ENCODE measurements at regions of chr17 and their contacts with region 1.

Region 1: DNA sequence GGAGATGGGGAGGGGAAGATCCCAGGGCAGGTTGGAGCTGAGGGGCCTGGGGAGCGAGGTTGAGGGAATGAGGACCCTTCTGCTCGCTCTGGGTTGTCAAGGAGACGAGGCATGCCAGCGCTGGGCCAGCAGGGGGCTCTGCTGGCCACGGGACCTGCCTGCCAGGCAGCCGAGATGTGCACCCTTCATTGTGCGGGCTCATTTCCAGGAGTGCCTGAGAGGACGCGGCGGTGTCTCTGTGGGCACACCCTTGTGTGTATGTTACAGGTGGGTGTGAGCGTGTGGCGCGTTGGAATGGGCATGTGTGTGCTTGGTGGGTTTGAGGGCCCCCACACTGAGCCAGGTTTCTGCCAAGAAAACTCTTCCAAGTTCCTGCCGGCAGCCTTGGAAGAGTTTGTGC is 15.9 kb downstream of the ARHGAP23 start:
- DNase-seq: peak; percentile 81 to 83
- H3K4me3 ChIP-seq: no peak overlapping the region
- H3K4me3 Mint-ChIP-seq: peak overlapping the region; percentile 14
- H3K27ac Mint-ChIP-seq: no peak overlapping the region
- H3K4me1 ChIP-seq: peaks cover 19% of the 10 kb centered on the region
- H3K4me1 Mint-ChIP-seq: peaks cover 2% of the 10 kb centered on the region
- H3K27me3 ChIP-seq: no peaks in the 10 kb centered on the region
- H3K27me3 Mint-ChIP-seq: peaks cover 3% of the 10 kb centered on the region
- CTCF ChIP-seq: peak; percentile 88 to 99

Region 2: GRCh38 chr17:38403491-38403890 is 40.7 kb before region 1 on chr17:
- CTCF ChIA-PET with region 1: no interaction called
- POLR2A ChIA-PET with region 1: no interaction called
- intact Hi-C with region 1: no loop called
- DNase-seq: peak in 1 of 2 experiments; percentile 22
- H3K4me3 ChIP-seq: no peak overlapping the region
- H3K4me3 Mint-ChIP-seq: no peak overlapping the region
- H3K27ac Mint-ChIP-seq: no peak overlapping the region
- H3K4me1 ChIP-seq: no peaks in the 10 kb centered on the region
- H3K4me1 Mint-ChIP-seq: no peaks in the 10 kb centered on the region
- H3K27me3 ChIP-seq: no peaks in the 10 kb centered on the region
- H3K27me3 Mint-ChIP-seq: no peaks in the 10 kb centered on the region
- CTCF ChIP-seq: no peak

Region 3: GRCh38 chr17:38428112-38428642 is 16.0 kb before region 1 on chr17 and contains the start of gene ARHGAP23:
- CTCF ChIA-PET with region 1: interaction called, 5 read pairs
- POLR2A ChIA-PET with region 1: no interaction called
- intact Hi-C with region 1: loop called (anchors 1 kb)
- DNase-seq: peak in 1 of 2 experiments; percentile 39
- H3K4me3 ChIP-seq: peak within 1 kb of the TSS; percentile 18
- H3K4me3 Mint-ChIP-seq: peak within 1 kb of the TSS; percentile 57
- H3K27ac Mint-ChIP-seq: no peak within 1 kb of the TSS
- H3K4me1 ChIP-seq: no peaks in the 10 kb centered on the region
- H3K4me1 Mint-ChIP-seq: peaks cover 7% of the 10 kb centered on the region
- H3K27me3 ChIP-seq: no peaks in the 10 kb centered on the region
- H3K27me3 Mint-ChIP-seq: no peaks in the 10 kb centered on the region
- CTCF ChIP-seq: no peak
- total RNA-seq, gene ARHGAP23: 69.7 and 83.5 TPM in 2 replicates

Region 4: DNA sequence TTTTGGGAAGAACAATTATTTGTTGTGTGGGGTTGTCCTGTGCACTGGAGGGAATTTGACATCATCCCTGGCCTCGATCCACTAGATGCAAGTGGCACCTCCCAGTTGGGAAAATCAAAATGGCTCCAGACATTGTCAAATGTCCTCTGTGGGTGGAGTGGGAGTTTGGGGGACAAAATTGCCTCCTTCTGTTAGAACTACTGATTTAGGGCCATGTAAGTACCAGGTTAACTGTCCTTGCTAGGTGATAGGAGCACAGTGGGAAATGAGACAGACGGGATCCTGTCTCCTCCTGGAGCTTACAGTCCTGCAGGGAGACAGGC is 41.0 kb after region 1 on chr17:
- CTCF ChIA-PET with region 1: no interaction called
- POLR2A ChIA-PET with region 1: no interaction called
- intact Hi-C with region 1: loop called (anchors 1 kb)
- DNase-seq: no peak
- H3K4me3 ChIP-seq: no peak overlapping the region
- H3K4me3 Mint-ChIP-seq: no peak overlapping the region
- H3K27ac Mint-ChIP-seq: no peak overlapping the region
- H3K4me1 ChIP-seq: no peaks in the 10 kb centered on the region
- H3K4me1 Mint-ChIP-seq: peaks cover 21% of the 10 kb centered on the region
- H3K27me3 ChIP-seq: no peaks in the 10 kb centered on the region
- H3K27me3 Mint-ChIP-seq: no peaks in the 10 kb centered on the region
- CTCF ChIP-seq: no peak

Region 5: DNA sequence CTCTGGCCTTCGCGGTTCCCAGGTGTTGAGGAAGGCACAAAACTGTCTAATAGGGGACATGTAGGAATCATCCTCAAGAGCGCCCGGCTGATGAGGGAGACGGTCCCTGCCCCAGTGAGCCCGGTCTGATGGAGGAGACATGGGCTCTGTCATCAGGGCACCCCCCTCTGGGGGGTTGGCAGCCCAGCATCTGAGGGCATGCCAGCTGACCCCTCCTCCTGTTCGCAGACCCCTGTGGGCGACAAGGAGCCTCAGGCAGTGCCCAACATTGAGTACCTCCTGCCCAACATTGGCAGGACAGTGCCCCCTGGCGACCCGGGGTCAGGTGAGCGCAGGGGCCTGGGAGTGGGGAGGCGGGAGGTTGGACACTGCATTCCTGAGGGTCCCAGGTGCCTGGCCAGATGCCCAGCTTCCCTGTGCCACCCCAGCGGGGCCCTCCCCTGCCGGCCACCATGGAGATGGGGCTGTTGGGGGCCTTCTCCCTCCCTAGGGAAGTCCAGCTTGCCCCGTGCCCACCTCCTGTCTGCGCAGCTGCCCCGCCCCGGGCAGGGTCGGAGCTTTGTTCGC is 54.1 kb after region 1 on chr17:
- CTCF ChIA-PET with region 1: no interaction called
- POLR2A ChIA-PET with region 1: no interaction called
- intact Hi-C with region 1: loop called (anchors 2 kb)
- DNase-seq: no peak
- H3K4me3 ChIP-seq: no peak overlapping the region
- H3K4me3 Mint-ChIP-seq: no peak overlapping the region
- H3K27ac Mint-ChIP-seq: no peak overlapping the region
- H3K4me1 ChIP-seq: no peaks in the 10 kb centered on the region
- H3K4me1 Mint-ChIP-seq: no peaks in the 10 kb centered on the region
- H3K27me3 ChIP-seq: no peaks in the 10 kb centered on the region
- H3K27me3 Mint-ChIP-seq: no peaks in the 10 kb centered on the region
- CTCF ChIP-seq: no peak

Region 6: DNA sequence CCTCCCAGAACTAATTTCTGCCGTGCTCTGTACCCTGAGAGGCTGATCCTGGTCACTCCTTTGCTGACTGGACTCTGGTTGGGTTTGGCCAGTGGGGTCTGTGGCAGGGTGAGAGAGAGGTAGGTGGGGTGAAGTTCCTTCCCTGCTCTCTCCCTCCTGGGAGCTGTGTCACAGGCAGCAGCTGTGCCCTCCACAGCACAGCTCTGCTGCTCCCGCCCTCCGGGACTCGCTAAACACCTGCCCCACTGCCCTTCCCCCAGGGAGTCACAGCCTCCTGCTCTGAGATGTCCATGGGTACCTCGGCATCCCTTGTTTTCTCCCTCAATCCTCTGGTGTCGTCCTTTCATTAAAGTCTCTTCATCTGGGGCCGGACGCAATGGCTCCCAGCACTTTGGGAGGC is 95.2 kb after region 1 on chr17:
- CTCF ChIA-PET with region 1: no interaction called
- POLR2A ChIA-PET with region 1: no interaction called
- intact Hi-C with region 1: no loop called
- DNase-seq: no peak
- H3K4me3 ChIP-seq: no peak overlapping the region
- H3K4me3 Mint-ChIP-seq: no peak overlapping the region
- H3K27ac Mint-ChIP-seq: no peak overlapping the region
- H3K4me1 ChIP-seq: no peaks in the 10 kb centered on the region
- H3K4me1 Mint-ChIP-seq: no peaks in the 10 kb centered on the region
- H3K27me3 ChIP-seq: no peaks in the 10 kb centered on the region
- H3K27me3 Mint-ChIP-seq: no peaks in the 10 kb centered on the region
- CTCF ChIP-seq: no peak

Measured in Caco-2 (cell line).